GM12878 (cell line): ENCODE measurements at regions of chrX and their contacts with region 1.

Region 1: DNA sequence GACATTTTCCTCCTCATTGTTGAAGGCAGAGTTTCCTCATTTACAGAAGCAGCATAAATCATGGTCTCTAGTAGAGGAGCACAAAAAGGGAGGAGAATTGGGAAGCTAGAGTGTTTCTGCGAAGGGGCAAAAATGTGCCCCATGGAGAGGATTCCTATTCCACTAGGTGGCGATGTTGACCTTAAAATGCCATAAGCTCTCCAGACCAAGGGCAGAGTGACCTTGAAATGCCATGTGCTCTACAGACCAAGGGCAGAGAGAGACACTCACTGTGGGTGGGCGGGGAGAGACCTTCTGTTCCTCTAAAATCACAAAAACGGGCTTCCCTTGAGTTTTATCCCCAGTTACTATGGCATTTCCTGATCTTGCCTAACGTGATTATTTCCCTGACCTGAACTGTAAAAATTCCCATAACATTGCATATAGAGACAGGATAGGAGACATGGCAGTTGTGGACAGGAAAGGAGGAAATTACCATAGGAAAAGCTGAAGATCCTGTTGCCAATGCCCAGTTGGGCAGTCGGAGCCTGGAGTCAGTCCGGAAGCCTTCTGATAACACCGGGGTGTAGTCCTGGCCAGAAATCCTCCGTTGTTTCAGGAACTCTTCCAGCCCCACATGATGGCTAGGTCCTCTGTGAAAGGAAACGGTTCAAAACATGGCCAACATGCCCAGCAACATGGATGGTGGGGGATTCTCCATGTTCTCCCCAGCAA is 567.7 kb downstream of the MAGEB5 start:
- DNase-seq: no peak
- ATAC-seq: peak; percentile 98
- H3K4me3 ChIP-seq: no peak overlapping the region
- H3K27ac ChIP-seq: no peak overlapping the region
- H3K4me1 ChIP-seq: no peaks in the 10 kb centered on the region
- H3K27me3 ChIP-seq: no peaks in the 10 kb centered on the region
- CTCF ChIP-seq: peak; percentile 62 to 68 (median 65); a peak in 5 of 6 replicates
- EP300 ChIP-seq: no peak
- POLR2A ChIP-seq: no peak
- RAD21 ChIP-seq: peak; percentile 81

Region 2: DNA sequence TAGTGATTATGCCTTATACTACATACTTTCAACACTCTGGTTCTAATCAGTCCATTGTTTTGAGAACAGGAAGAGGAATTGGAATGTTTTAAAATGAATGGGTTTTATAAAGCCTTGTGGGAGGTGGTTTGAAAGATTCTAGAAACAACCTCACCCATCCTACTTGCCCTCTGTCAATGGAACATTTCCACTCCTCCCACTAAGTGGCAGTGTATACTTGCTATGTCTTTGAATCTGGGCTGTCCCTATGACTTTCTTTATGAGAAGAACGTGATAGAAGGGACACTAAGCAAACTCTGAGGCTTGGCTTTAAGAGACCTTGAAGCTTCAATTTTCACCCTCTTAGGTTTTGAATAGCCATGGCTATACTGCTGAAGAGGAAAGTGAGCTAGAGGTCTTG is 68.3 kb after region 1 on chrX:
- CTCF ChIA-PET with region 1: interaction called, 12 read pairs
- POLR2A ChIA-PET with region 1: no interaction called
- RAD21 ChIA-PET with region 1: no interaction called
- SMC1A ChIA-PET with region 1: interaction called, 3 read pairs
- in situ Hi-C with region 1: no loop called
- intact Hi-C with region 1: no loop called
- DNase-seq: no peak
- ATAC-seq: peak; percentile 96
- H3K4me3 ChIP-seq: no peak overlapping the region
- H3K27ac ChIP-seq: no peak overlapping the region
- H3K4me1 ChIP-seq: no peaks in the 10 kb centered on the region
- H3K27me3 ChIP-seq: no peaks in the 10 kb centered on the region
- CTCF ChIP-seq: peak in 2 of 3 experiments; percentile 27 to 53; a peak in 3 of 6 replicates
- EP300 ChIP-seq: no peak
- POLR2A ChIP-seq: no peak
- RAD21 ChIP-seq: peak; percentile 64

Region 3: GRCh38 chrX:26918633-26919032 is 135.0 kb after region 1 on chrX:
- CTCF ChIA-PET with region 1: interaction called, 10 read pairs
- POLR2A ChIA-PET with region 1: no interaction called
- RAD21 ChIA-PET with region 1: interaction called, 6 read pairs
- SMC1A ChIA-PET with region 1: interaction called, 5 read pairs
- in situ Hi-C with region 1: no loop called
- intact Hi-C with region 1: loop called (anchors 1 kb)
- DNase-seq: no peak
- ATAC-seq: peak; percentile 87
- H3K4me3 ChIP-seq: no peak overlapping the region
- H3K27ac ChIP-seq: no peak overlapping the region
- H3K4me1 ChIP-seq: no peaks in the 10 kb centered on the region
- H3K27me3 ChIP-seq: no peaks in the 10 kb centered on the region
- CTCF ChIP-seq: peak; percentile 55 to 63 (median 60)
- EP300 ChIP-seq: no peak
- POLR2A ChIP-seq: no peak
- RAD21 ChIP-seq: peak; percentile 69

Region 4: GRCh38 chrX:26925088-26925487 is 141.4 kb after region 1 on chrX:
- CTCF ChIA-PET with region 1: interaction called, 10 read pairs
- POLR2A ChIA-PET with region 1: no interaction called
- RAD21 ChIA-PET with region 1: no interaction called
- SMC1A ChIA-PET with region 1: interaction called, 3 read pairs
- in situ Hi-C with region 1: no loop called
- intact Hi-C with region 1: no loop called
- DNase-seq: no peak
- ATAC-seq: no peak
- H3K4me3 ChIP-seq: no peak overlapping the region
- H3K27ac ChIP-seq: no peak overlapping the region
- H3K4me1 ChIP-seq: no peaks in the 10 kb centered on the region
- H3K27me3 ChIP-seq: no peaks in the 10 kb centered on the region
- CTCF ChIP-seq: no peak
- EP300 ChIP-seq: no peak
- POLR2A ChIP-seq: no peak
- RAD21 ChIP-seq: no peak

Region 5: DNA sequence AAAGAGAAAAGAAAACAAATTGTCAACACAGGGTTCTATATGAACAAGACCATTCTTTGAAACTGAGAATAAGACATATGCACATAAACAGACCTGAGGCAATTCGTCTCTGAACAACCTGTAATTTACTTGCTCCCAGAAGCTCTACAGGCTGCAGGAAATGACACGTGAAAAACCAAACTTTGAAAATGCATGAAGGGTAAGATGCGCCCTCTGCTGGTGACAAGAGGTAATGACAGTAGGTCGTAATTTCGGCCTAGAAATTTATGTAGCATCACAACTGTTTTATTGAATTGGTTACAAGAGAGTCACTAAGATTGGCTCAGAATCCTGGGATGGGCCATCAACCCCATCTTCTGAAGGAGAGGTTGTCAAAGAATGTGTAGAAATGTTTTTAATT is 403.0 kb after region 1 on chrX:
- CTCF ChIA-PET with region 1: interaction called, 49 read pairs
- POLR2A ChIA-PET with region 1: no interaction called
- RAD21 ChIA-PET with region 1: interaction called, 13 read pairs
- SMC1A ChIA-PET with region 1: interaction called, 37 read pairs
- in situ Hi-C with region 1: no loop called
- intact Hi-C with region 1: loop called (anchors 1 kb)
- DNase-seq: peak; percentile 0
- ATAC-seq: peak; percentile 62
- H3K4me3 ChIP-seq: no peak overlapping the region
- H3K27ac ChIP-seq: no peak overlapping the region
- H3K4me1 ChIP-seq: no peaks in the 10 kb centered on the region
- H3K27me3 ChIP-seq: no peaks in the 10 kb centered on the region
- CTCF ChIP-seq: peak; percentile 79 to 83 (median 83)
- EP300 ChIP-seq: no peak
- POLR2A ChIP-seq: no peak
- RAD21 ChIP-seq: peak; percentile 78

Region 6: DNA sequence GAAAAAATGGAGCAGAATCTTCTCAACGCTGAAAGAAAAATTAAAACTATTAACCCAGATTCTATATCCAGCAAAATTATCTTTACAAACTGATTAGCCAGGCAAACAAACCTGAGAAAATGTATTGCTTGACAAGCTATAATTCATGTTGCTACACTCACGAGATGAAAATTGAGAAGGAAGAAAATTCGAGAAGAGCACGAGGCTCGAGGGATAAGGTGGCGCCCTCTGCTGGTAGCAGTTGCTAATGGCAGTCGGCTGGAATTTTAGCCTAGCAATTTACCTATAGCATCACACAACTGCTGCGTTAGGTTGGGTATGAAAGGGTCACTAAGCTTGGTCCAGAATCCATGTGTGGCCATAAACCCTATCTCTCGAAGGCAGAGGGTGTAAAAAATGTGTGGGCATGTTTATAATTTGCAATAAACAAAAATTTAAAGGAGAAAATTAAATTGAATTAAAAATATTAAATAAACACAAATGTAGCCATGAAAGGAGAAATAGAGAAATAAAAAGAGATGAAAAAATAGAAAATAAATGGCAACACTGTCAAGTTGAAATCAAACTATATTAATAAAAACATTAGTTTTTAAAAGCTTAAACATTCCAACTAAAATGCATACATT is 552.9 kb after region 1 on chrX:
- CTCF ChIA-PET with region 1: interaction called, 10 read pairs
- POLR2A ChIA-PET with region 1: no interaction called
- RAD21 ChIA-PET with region 1: no interaction called
- SMC1A ChIA-PET with region 1: interaction called, 6 read pairs
- in situ Hi-C with region 1: no loop called
- intact Hi-C with region 1: loop called (anchors 1 kb)
- DNase-seq: no peak
- ATAC-seq: peak; percentile 73
- H3K4me3 ChIP-seq: no peak overlapping the region
- H3K27ac ChIP-seq: no peak overlapping the region
- H3K4me1 ChIP-seq: no peaks in the 10 kb centered on the region
- H3K27me3 ChIP-seq: no peaks in the 10 kb centered on the region
- CTCF ChIP-seq: peak; percentile 67 to 90 (median 87)
- EP300 ChIP-seq: no peak
- POLR2A ChIP-seq: no peak
- RAD21 ChIP-seq: peak; percentile 43

Region 7: GRCh38 chrX:27399146-27399456 is 615.4 kb after region 1 on chrX:
- CTCF ChIA-PET with region 1: interaction called, 3 read pairs
- POLR2A ChIA-PET with region 1: no interaction called
- RAD21 ChIA-PET with region 1: no interaction called
- SMC1A ChIA-PET with region 1: no interaction called
- in situ Hi-C with region 1: no loop called
- intact Hi-C with region 1: loop called (anchors 5 kb)
- DNase-seq: no peak
- ATAC-seq: no peak
- H3K4me3 ChIP-seq: no peak overlapping the region
- H3K27ac ChIP-seq: no peak overlapping the region
- H3K4me1 ChIP-seq: no peaks in the 10 kb centered on the region
- H3K27me3 ChIP-seq: no peaks in the 10 kb centered on the region
- CTCF ChIP-seq: no peak
- EP300 ChIP-seq: no peak
- POLR2A ChIP-seq: no peak
- RAD21 ChIP-seq: no peak